ENCODE measurements at regions of chr11 and their contacts with region 1.

Region 1: GRCh38 chr11:111601979-111602864 is at the start of gene SIK2:
- DNase-seq: peak; percentile 50
- H3K4me3 ChIP-seq: peak within 1 kb of the TSS; percentile 61 to 92 (median 81)
- H3K27ac ChIP-seq: peak within 1 kb of the TSS; percentile 90 to 98 (median 94)
- H3K4me1 ChIP-seq: peaks cover 11 to 54% (median 15%) of the 10 kb centered on the region in 3 donors
- H3K27me3 ChIP-seq: no peaks in the 10 kb centered on the region
- CTCF ChIP-seq: peak; percentile 64 to 95 (median 88)
- POLR2A ChIP-seq: peak in 1 of 4 donors; percentile 56
- total RNA-seq, gene SIK2: 6.1 to 24.3 (median 9.5) TPM

Region 2: GRCh38 chr11:111694851-111695250 is 92.6 kb after region 1 on chr11:
- intact Hi-C with region 1: no loop called
- DNase-seq: no peak
- H3K4me3 ChIP-seq: no peak overlapping the region
- H3K27ac ChIP-seq: no peak overlapping the region
- H3K4me1 ChIP-seq: peaks cover 0 to 21% (median 0%) of the 10 kb centered on the region in 3 donors
- H3K27me3 ChIP-seq: no peaks in the 10 kb centered on the region
- CTCF ChIP-seq: no peak
- POLR2A ChIP-seq: no peak

Region 3: GRCh38 chr11:111766093-111766833 is 164.0 kb after region 1 on chr11 and contains the start of gene PPP2R1B:
- intact Hi-C with region 1: loop called (anchors 5 kb)
- DNase-seq: peak; percentile 44
- H3K4me3 ChIP-seq: peak within 1 kb of the TSS; percentile 73 to 95 (median 82)
- H3K27ac ChIP-seq: peak within 1 kb of the TSS; percentile 79 to 95 (median 91)
- H3K4me1 ChIP-seq: peaks cover 6 to 42% (median 11%) of the 10 kb centered on the region in 3 donors
- H3K27me3 ChIP-seq: no peaks in the 10 kb centered on the region
- CTCF ChIP-seq: no peak
- POLR2A ChIP-seq: peak in 2 of 4 donors; percentile 9 to 52
- total RNA-seq, gene PPP2R1B: 17.6 to 39.7 (median 27.7) TPM

Measured in esophagus squamous epithelium (tissue), 5 donors.